Dendritic cell treated with granulocyte-macrophage colony-stimulating factor and Interleukin-4, amounts not matched to agents 40 ng/mL and 50 ng/mL, for 4 days (primary cell): ENCODE measurements at regions of chr13 and their contacts with region 1.

Region 1: DNA sequence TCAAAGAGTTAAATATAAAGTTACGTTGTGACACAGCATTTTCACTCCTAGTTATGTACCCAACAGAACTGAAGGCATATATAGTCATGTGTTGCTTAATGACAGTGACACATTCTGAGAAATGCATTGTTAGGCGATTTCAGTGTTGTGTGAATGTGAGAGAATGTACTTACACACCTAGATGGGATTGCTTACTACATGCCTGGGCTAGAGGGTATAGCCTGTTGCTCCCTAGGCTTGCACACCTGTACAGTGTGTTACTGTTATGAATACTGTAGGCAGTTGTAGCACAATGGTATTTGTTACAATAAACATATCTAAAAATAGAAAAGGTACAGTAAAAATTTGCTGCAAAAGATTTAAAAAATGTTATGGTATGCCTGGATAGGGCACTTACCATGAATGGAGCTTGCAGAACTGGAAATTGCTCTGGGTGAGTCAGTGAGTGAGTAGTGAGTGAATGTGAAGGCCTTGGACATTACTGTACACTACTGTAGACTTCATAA is 89.2 kb downstream of the DHRS12 start:
- H3K4me3 Mint-ChIP-seq: no peak overlapping the region
- H3K27ac Mint-ChIP-seq: peak overlapping the region; percentile 42
- H3K4me1 Mint-ChIP-seq: peaks cover 26% of the 10 kb centered on the region
- H3K27me3 Mint-ChIP-seq: no peaks in the 10 kb centered on the region

Region 2: DNA sequence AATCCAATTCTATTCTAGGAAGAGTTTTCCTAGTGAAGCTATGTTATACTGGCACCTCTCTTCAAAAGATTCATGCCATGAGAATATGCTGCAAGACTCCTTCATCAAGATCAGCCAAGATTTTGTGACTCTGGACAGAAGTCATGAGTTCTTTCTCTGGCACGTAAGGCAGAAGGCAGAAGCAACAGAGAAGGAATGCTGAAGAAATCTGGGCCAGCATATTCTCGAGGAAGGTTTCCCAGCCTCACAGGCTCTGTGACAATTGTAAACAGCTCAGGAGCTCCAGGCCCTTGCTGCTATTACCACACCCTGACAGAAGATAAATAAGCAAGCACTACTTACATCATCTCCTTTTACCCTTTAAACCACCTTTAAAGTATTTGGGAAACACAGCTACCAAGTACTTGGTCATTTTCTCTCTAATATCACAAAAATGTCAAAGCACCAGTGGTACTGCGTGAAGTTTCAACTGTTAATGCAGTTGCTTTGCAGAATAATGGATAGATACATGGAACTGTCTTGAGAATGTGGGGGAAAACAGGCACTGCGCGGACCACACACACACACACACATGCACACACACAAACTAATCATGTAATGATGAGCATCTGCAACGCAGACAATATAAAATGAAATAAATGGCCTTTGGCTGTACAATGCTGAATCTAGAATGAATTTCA is 317.3 kb before region 1 on chr13:
- intact Hi-C with region 1: no loop called
- H3K4me3 Mint-ChIP-seq: no peak overlapping the region
- H3K27ac Mint-ChIP-seq: no peak overlapping the region
- H3K4me1 Mint-ChIP-seq: peaks cover 8% of the 10 kb centered on the region
- H3K27me3 Mint-ChIP-seq: no peaks in the 10 kb centered on the region

Region 3: GRCh38 chr13:51590971-51591627 is 123.6 kb before region 1 on chr13:
- intact Hi-C with region 1: loop called (anchors 5 kb)
- H3K4me3 Mint-ChIP-seq: peak overlapping the region; percentile 2
- H3K27ac Mint-ChIP-seq: no peak overlapping the region
- H3K4me1 Mint-ChIP-seq: peaks cover 68% of the 10 kb centered on the region
- H3K27me3 Mint-ChIP-seq: no peaks in the 10 kb centered on the region

Region 4: GRCh38 chr13:51632591-51633362 is 81.9 kb before region 1 on chr13:
- intact Hi-C with region 1: no loop called
- H3K4me3 Mint-ChIP-seq: no peak overlapping the region
- H3K27ac Mint-ChIP-seq: peak overlapping the region; percentile 63
- H3K4me1 Mint-ChIP-seq: peaks cover 75% of the 10 kb centered on the region
- H3K27me3 Mint-ChIP-seq: no peaks in the 10 kb centered on the region